ENCODE measurements at regions of chr5 and their contacts with region 1.

Region 1: GRCh38 chr5:100731768-100732167 is 171.3 kb downstream of the ST8SIA4 start:
- DNase-seq: peak in 7 of 9 donors; percentile 14 to 55 (median 45)
- ATAC-seq: peak; percentile 87
- H3K4me3 ChIP-seq: peak overlapping the region; percentile 7
- H3K4me3 Mint-ChIP-seq: peak overlapping the region in 9 of 10 donors; percentile 1 to 85 (median 80)
- H3K27ac ChIP-seq: no peak overlapping the region
- H3K27ac Mint-ChIP-seq: peak overlapping the region; percentile 28 to 83 (median 65)
- H3K4me1 ChIP-seq: peaks cover 0 to 11% of the 10 kb centered on the region in 2 donors
- H3K4me1 Mint-ChIP-seq: peaks cover 4 to 14% (median 9%) of the 10 kb centered on the region in 7 donors
- H3K27me3 ChIP-seq: no peaks in the 10 kb centered on the region
- H3K27me3 Mint-ChIP-seq: no peaks in the 10 kb centered on the region

Region 2: GRCh38 chr5:100667161-100667630 is 64.6 kb before region 1 on chr5:
- CTCF ChIA-PET with region 1: no interaction called
- POLR2A ChIA-PET with region 1: no interaction called
- intact Hi-C with region 1: loop called in 1 of 2 experiments (anchors 2 kb)
- DNase-seq: peak in 5 of 9 donors; percentile 4 to 42 (median 13)
- ATAC-seq: peak; percentile 80
- H3K4me3 ChIP-seq: no peak overlapping the region
- H3K4me3 Mint-ChIP-seq: peak overlapping the region in 1 of 10 donors; percentile 3
- H3K27ac ChIP-seq: no peak overlapping the region
- H3K27ac Mint-ChIP-seq: peak overlapping the region in 1 of 9 donors; percentile 4
- H3K4me1 ChIP-seq: peaks cover 3 to 14% of the 10 kb centered on the region in 2 donors
- H3K4me1 Mint-ChIP-seq: peaks cover 0 to 11% (median 7%) of the 10 kb centered on the region in 7 donors
- H3K27me3 ChIP-seq: no peaks in the 10 kb centered on the region
- H3K27me3 Mint-ChIP-seq: peaks cover 0 to 9% (median 0%) of the 10 kb centered on the region in 5 donors